ENCODE measurements at regions of chr12 and their contacts with region 1.

Region 1: DNA sequence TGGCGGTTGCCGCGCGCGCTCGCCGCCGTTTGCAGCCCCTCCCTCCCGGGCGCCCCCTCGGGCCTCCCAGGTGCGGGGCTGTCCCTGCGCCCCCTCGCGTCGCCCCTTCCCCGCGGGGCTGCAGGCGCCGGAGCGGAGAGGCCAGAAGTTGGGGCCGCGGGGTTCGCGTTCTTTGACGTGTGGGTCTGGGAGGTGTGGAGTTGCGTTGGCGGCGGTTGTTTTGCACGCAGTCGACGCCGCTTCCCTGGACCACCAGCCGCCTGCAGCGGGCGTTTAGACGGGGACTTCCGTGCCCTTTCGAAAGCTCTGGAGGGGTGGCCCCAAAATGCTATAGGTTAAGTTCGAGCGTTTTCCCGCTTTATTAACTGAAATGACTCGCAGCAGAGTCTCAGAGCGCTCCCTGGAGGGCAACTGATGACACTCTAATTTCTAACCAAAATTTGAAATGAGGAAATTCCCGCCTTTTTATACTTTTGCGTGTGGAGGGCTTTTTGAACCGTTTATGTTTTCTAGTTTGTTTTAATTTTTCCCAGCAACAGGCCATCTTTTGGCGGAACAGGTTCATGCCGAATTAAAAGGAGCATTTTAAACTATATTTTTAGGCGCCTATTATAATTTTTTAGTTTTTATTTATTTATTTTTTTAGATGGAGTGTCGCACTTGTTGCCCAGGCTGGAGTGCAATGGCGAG is 939 bp downstream of the TMPO start:
- DNase-seq: peak; percentile 49 to 80 (median 69)
- ATAC-seq: peak; percentile 59 to 68 (median 65)
- H3K4me3 ChIP-seq: peak overlapping the region; percentile 76 to 94 (median 82)
- H3K27ac ChIP-seq: peak overlapping the region; percentile 85 to 98 (median 92)
- H3K4me1 ChIP-seq: peaks cover 0 to 29% (median 27%) of the 10 kb centered on the region in 3 donors
- H3K27me3 ChIP-seq: no peaks in the 10 kb centered on the region
- CTCF ChIP-seq: peak in 3 of 4 donors; percentile 9 to 49 (median 46)

Region 2: DNA sequence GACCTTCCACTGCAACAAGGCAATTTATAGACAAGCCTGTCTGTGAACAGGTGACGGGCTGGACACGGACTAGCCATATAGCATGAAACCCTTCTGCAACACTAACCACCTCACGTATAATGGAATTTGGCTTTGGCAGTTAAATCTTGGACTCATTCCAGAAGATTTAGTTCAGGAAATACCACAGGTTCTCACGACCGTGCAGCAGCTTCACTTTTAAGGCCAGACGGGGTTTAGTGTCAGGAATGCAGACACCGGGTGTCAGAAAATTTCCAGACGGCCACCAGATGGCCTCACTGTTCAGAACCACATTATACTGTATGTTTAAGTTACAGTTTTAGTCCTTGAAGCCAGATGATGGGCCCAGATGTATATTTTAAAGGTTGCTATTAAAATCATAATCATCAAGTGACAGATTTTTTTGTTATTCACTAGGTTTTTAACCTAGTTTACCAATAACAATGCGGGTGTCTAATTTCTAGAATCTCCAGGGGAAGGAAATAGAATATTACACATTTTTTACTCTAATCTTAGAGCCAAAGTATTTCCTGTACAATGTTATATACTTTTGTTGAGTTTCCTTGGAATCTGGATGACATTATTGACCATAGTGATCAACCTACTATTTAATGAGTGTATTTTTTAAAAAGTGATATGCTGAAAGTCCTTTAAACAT is 91.5 kb before region 1 on chr12:
- intact Hi-C with region 1: loop called in 1 of 3 experiments (anchors 5 kb)
- DNase-seq: peak in 5 of 6 donors; percentile 42 to 73 (median 56)
- ATAC-seq: peak; percentile 89 to 98 (median 92)
- H3K4me3 ChIP-seq: no peak overlapping the region
- H3K27ac ChIP-seq: no peak overlapping the region
- H3K4me1 ChIP-seq: peaks cover 4 to 7% (median 6%) of the 10 kb centered on the region in 3 donors
- H3K27me3 ChIP-seq: no peaks in the 10 kb centered on the region
- CTCF ChIP-seq: peak in 3 of 4 donors; percentile 54 to 71 (median 58)

Measured in pancreas (tissue), 10 donors.